ENCODE measurements at regions of chr2 and their contacts with region 1.

Region 1: DNA sequence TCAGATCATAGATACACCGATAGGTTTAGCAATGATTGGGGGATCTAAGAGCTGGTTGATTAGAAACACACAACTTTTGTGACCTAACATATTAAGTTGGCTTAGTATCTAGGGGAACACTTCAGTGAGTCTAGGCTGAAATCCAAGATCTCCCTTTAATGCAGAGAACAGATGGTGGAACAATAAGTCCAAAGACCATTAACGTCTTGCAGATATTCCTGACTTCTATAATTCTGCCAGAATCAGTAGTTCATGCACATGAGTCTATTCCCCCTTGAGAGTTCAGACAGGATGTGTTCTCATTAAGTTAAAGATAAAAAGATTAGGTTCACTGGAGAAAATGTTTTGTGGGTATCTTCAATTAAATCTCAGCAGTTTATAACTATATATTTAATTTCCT is 506.5 kb downstream of the TSN start:
- DNase-seq: peak; percentile 89
- H3K4me3 ChIP-seq: no peak overlapping the region
- H3K27ac ChIP-seq: no peak overlapping the region
- H3K4me1 ChIP-seq: peaks cover 41% of the 10 kb centered on the region
- H3K27me3 ChIP-seq: no peaks in the 10 kb centered on the region
- CTCF ChIP-seq: no peak

Region 2: GRCh38 chr2:122486086-122486485 is 224.2 kb after region 1 on chr2:
- CTCF ChIA-PET with region 1: no interaction called
- POLR2A ChIA-PET with region 1: no interaction called
- intact Hi-C with region 1: loop called (anchors 5 kb)
- DNase-seq: peak; percentile 89
- H3K4me3 ChIP-seq: no peak overlapping the region
- H3K27ac ChIP-seq: peak overlapping the region; percentile 62
- H3K4me1 ChIP-seq: peaks cover 69% of the 10 kb centered on the region
- H3K27me3 ChIP-seq: no peaks in the 10 kb centered on the region
- CTCF ChIP-seq: no peak